Activated CD4-positive, alpha-beta T cell treated with anti-CD3 and anti-CD28 coated beads, Interleukin-2, amount 10 ng/mL, durations not matched to agents 7 days and 5 days (primary cell): ENCODE measurements at regions of chr1 and their contacts with region 1.

Region 1: GRCh38 chr1:233554037-233554436 is 59.9 kb upstream of the KCNK1 start:
- DNase-seq: no peak
- H3K4me3 Mint-ChIP-seq: no peak overlapping the region
- H3K27ac Mint-ChIP-seq: no peak overlapping the region
- H3K4me1 Mint-ChIP-seq: no peaks in the 10 kb centered on the region
- H3K27me3 Mint-ChIP-seq: no peaks in the 10 kb centered on the region

Region 2: GRCh38 chr1:233598891-233599541 is 45.0 kb after region 1 on chr1:
- CTCF ChIA-PET with region 1: no interaction called
- POLR2A ChIA-PET with region 1: interaction called, 10 read pairs
- DNase-seq: peak; percentile 14
- H3K4me3 Mint-ChIP-seq: no peak overlapping the region
- H3K27ac Mint-ChIP-seq: peak overlapping the region; percentile 68
- H3K4me1 Mint-ChIP-seq: peaks cover 10% of the 10 kb centered on the region
- H3K27me3 Mint-ChIP-seq: peaks cover 2% of the 10 kb centered on the region